ENCODE measurements at regions of chr1 and their contacts with region 1.

Region 1: GRCh38 chr1:24659993-24660665 is 17.0 kb downstream of the SRRM1 start:
- DNase-seq: no peak
- ATAC-seq: no peak
- H3K4me3 ChIP-seq: no peak overlapping the region
- H3K27ac ChIP-seq: no peak overlapping the region
- H3K4me1 ChIP-seq: peaks cover 0 to 13% (median 0%) of the 10 kb centered on the region in 12 donors
- H3K27me3 ChIP-seq: no peaks in the 10 kb centered on the region
- CTCF ChIP-seq: no peak
- POLR2A ChIP-seq: no peak

Region 2: DNA sequence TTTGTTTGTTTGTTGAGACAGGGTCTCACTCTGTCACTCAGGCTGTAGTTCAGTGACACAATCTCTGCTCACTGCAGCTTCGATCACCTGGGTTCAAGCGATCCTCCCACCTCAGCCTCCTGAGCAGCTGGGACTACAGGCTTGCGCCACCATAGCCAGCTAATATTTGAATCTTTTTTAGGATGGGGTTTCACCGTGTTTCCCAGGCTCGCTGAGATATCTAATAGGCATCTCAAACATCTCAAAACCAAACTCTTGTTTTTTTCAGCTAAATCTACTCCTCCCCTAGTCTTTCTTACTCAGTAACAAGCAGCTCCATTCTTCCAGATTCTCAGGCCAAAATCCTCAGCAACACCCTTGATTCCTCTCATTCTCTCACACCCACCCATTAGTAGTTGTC is 39.0 kb before region 1 on chr1:
- intact Hi-C with region 1: no loop called
- DNase-seq: no peak
- ATAC-seq: no peak
- H3K4me3 ChIP-seq: no peak overlapping the region
- H3K27ac ChIP-seq: no peak overlapping the region
- H3K4me1 ChIP-seq: no peaks in the 10 kb centered on the region
- H3K27me3 ChIP-seq: peaks cover 0 to 10% (median 0%) of the 10 kb centered on the region in 9 donors
- CTCF ChIP-seq: no peak
- POLR2A ChIP-seq: no peak

Region 3: GRCh38 chr1:25223471-25223870 is 563.3 kb after region 1 on chr1:
- intact Hi-C with region 1: loop called in 3 of 10 experiments (anchors 5 to 10 kb)
- DNase-seq: no peak
- ATAC-seq: no peak
- H3K4me3 ChIP-seq: no peak overlapping the region
- H3K27ac ChIP-seq: no peak overlapping the region
- H3K4me1 ChIP-seq: no peaks in the 10 kb centered on the region
- H3K27me3 ChIP-seq: no peaks in the 10 kb centered on the region
- CTCF ChIP-seq: no peak
- POLR2A ChIP-seq: no peak

Region 4: GRCh38 chr1:25232027-25232865 is 572.1 kb after region 1 on chr1 and contains the start of gene SYF2:
- intact Hi-C with region 1: loop called in 3 of 10 experiments (anchors 5 to 10 kb)
- DNase-seq: peak; percentile 92 to 95 (median 92)
- ATAC-seq: peak; percentile 91 to 97 (median 95)
- H3K4me3 ChIP-seq: peak within 1 kb of the TSS; percentile 60 to 94 (median 76)
- H3K27ac ChIP-seq: peak within 1 kb of the TSS; percentile 73 to 98 (median 92)
- H3K4me1 ChIP-seq: peaks cover 0 to 47% (median 27%) of the 10 kb centered on the region in 12 donors
- H3K27me3 ChIP-seq: no peaks in the 10 kb centered on the region
- CTCF ChIP-seq: no peak
- POLR2A ChIP-seq: peak in 1 of 2 donors; percentile 52
- total RNA-seq, gene SYF2: 25.0 to 41.3 (median 31.6) TPM

Region 5: DNA sequence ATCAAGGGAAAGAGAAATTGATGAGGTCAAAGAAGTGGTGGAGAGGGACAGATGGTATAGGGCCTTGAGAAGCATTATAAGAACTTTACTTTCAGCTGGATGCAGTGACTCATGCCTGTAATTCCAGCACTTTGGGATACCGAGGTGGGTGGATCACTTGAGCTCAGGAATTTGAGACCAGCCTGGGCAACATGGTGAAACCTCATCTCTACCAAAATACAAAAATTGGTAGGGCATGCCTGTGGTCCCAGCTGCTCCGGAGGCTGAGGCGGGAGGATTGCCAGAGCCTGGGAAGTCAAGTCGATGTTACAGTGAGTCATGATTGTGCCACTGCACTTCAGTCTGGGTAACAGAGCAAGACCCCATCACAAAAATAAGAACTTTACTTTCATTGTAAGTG is 683.7 kb after region 1 on chr1:
- intact Hi-C with region 1: loop called in 1 of 10 experiments (anchors 10 kb)
- DNase-seq: no peak
- ATAC-seq: no peak
- H3K4me3 ChIP-seq: no peak overlapping the region
- H3K27ac ChIP-seq: no peak overlapping the region
- H3K4me1 ChIP-seq: peaks cover 0 to 38% (median 25%) of the 10 kb centered on the region in 12 donors
- H3K27me3 ChIP-seq: no peaks in the 10 kb centered on the region
- CTCF ChIP-seq: no peak
- POLR2A ChIP-seq: no peak

Measured in heart left ventricle (tissue), 16 donors.